ENCODE measurements at regions of chr10 and their contacts with region 1.

Region 1: DNA sequence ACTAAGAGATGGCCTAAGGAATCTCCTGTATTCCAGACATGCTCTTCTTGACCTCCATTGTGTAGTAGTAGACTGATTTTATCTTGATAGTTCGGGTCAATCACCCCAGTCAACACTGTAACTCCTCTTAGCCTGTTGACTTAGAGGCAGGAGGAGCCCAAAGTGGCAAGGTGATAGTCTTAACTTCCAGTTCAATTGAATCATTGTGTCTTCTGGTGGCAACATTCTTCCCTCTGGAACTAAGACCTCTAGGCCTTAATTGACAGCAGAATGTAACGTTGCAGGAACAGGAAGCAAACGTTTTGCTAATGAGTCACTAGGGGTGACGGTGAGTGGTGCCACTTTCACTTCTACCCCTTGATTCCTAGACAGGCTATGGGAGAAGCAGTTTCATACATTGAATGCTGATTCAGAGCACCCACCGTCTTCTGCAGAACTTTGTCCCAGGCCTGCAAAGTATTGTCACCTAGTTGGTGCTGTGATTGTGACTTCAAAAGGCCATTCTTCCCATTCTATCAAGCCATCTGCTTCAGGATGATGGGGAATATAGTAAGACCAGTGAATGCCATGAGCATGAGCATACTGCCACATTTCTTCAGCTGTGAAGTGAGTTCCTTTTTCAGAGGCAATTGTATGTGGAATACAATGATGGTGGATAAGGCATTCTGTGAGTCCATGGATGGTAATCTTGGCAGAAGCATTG is 23.9 kb upstream of the PAPSS2 start:
- DNase-seq: peak; percentile 85
- ATAC-seq: peak; percentile 80
- H3K4me3 ChIP-seq: no peak overlapping the region
- H3K27ac ChIP-seq: no peak overlapping the region
- H3K4me1 ChIP-seq: peaks cover 6% of the 10 kb centered on the region; the same call in 1 of the 2 replicates
- H3K27me3 ChIP-seq: no peaks in the 10 kb centered on the region
- CTCF ChIP-seq: no peak
- POLR2A ChIP-seq: no peak
- RAD21 ChIP-seq: no peak

Region 2: DNA sequence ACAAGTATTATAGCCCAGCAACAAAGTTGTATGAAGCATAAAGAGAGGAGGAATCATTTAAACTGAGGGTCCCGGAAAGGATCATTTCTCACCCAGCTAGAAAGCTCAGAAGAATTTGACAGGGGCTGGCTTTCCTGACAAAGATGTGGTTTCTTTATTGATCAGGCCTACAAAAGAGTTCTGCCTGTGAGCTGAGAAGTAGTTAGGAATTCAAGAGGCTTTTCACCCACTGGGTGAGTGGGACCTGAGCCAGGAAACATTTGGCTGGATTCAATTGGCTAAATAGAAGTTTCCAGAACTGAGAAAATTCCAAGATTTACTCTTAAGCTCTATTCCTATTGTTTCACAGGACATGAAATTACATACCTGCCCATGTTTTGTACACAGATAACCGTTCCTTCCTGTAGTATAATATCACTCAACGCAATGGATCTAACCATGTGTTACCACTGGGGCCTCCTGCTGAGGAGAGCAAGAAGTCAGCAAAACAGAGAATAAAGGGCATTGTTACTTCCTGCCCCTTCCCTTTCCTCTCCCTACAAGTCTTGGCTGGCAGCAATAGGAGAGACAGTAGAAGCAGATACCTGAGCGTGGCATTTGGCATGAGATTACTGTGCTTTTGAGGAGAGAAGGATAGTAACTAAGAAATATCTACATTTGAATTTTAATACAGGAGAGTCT is 30.0 kb before region 1 on chr10:
- CTCF ChIA-PET with region 1: no interaction called
- POLR2A ChIA-PET with region 1: no interaction called
- dilution Hi-C with region 1: no loop called
- in situ Hi-C with region 1: no loop called
- intact Hi-C with region 1: loop called (anchors 5 kb)
- DNase-seq: no peak
- ATAC-seq: no peak
- H3K4me3 ChIP-seq: no peak overlapping the region
- H3K27ac ChIP-seq: no peak overlapping the region
- H3K4me1 ChIP-seq: no peaks in the 10 kb centered on the region
- H3K27me3 ChIP-seq: no peaks in the 10 kb centered on the region
- CTCF ChIP-seq: no peak
- POLR2A ChIP-seq: no peak
- RAD21 ChIP-seq: no peak

Region 3: DNA sequence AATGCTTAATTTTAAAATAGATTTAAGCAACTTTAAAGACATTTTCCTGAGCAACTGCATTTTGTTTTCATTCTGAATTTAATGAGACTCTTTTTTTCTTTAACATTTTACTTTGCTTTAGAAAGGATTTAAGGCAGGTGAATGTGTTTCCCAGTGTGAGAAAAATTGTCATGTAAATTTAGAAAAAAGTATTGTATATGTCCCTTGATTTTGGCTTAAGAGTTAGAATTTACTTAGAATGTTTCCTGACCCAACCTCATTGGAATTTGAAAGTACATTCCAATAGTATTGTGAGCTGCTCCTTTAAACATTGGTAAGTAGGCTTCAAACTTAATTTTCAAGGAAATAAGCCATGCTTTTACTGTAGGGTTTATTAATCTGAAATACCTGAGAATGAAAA is 337.9 kb after region 1 on chr10:
- CTCF ChIA-PET with region 1: no interaction called
- POLR2A ChIA-PET with region 1: no interaction called
- dilution Hi-C with region 1: no loop called
- in situ Hi-C with region 1: no loop called
- intact Hi-C with region 1: no loop called
- DNase-seq: peak; percentile 59
- ATAC-seq: peak; percentile 72
- H3K4me3 ChIP-seq: no peak overlapping the region
- H3K27ac ChIP-seq: no peak overlapping the region
- H3K4me1 ChIP-seq: peaks cover 2% of the 10 kb centered on the region; the same call in 1 of the 2 replicates
- H3K27me3 ChIP-seq: no peaks in the 10 kb centered on the region
- CTCF ChIP-seq: no peak
- POLR2A ChIP-seq: no peak
- RAD21 ChIP-seq: no peak